ENCODE measurements at regions of chr4 and their contacts with region 1.

Region 1: DNA sequence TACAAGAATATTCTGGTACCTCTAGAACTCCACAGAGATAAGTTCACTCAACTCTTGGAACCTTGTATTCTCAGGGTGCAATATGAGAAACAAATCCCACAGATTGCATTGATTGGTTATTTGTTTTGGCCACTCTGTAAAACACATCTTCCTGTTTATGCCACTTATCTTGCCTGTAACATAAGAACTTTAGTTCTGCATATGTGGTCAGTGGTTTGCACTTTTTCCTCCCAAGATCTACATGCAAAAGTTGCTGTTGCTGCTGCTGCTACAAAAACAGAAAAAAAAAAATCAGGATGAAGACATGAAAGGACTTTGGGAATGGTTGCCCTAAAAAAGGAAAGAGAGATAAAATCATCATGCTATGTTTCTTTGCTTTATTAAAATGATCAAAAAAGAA is 9.6 kb downstream of the ODAPH start:
- DNase-seq: no peak
- H3K4me3 ChIP-seq: no peak overlapping the region
- H3K27ac ChIP-seq: no peak overlapping the region
- H3K4me1 ChIP-seq: no peaks in the 10 kb centered on the region
- H3K27me3 ChIP-seq: no peaks in the 10 kb centered on the region
- CTCF ChIP-seq: no peak
- EP300 ChIP-seq: no peak
- RAD21 ChIP-seq: no peak

Region 2: DNA sequence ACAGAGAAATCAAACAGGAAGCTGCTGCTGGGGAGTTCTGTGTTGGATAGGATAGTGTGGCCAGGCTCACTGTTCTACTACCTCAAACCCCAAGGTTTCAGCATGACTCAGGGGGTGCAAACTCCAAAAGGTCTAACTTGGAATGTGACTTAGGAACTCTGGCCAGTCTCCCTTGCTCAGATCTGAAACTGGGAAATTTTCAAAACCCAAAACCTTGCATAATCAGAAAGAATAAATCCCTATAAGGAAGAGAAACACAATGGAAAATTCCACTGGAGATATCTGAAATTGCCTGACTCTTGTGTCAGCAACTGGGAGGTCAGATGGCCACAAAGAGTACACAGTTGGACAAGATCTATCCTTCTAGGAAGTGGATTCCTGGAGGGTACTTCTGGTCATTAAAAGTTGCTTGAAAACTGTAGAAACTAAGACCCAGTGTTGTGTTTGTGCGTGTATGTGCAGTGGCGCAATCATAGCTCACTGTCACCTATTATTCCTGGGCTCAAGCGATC is 278.7 kb after region 1 on chr4:
- CTCF ChIA-PET with region 1: interaction called, 18 read pairs
- POLR2A ChIA-PET with region 1: no interaction called
- DNase-seq: no peak
- H3K4me3 ChIP-seq: no peak overlapping the region
- H3K27ac ChIP-seq: no peak overlapping the region; a peak in 1 of 4 replicates
- H3K4me1 ChIP-seq: no peaks in the 10 kb centered on the region
- H3K27me3 ChIP-seq: no peaks in the 10 kb centered on the region
- CTCF ChIP-seq: no peak
- EP300 ChIP-seq: no peak
- RAD21 ChIP-seq: no peak